AG04450 (cell line): ENCODE measurements at regions of chr19 and their contacts with region 1.

Region 1: DNA sequence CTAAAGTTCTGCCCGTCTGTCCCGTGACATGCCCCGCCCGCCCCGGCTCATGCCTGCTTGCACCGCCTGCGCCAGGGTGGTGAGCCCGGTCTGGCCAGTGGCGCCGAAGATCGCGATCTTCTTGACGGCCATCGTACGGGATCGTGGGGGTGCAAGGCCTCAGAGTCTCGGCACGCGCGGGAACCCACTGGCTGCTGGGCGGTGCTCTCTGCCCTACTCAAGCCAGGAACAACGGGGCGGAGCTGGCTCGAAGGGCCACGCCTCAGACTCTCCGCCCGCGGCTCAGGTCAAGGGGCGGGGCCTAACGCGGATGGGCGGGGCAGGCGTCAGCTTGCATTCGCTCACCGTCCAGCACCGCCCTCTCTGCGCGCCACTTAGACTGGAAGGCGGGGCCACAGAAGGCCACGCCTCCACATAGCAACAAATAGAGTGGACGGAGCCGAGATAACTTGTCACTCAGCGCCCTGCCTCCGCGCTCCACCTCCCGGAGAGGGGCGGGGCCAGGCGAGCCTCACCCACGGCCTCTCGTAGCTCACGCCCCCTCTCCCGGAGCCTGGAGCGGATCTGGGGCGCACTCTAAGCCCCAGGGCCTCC is at the start of gene BLVRB:
- DNase-seq: peak; percentile 99
- H3K4me3 ChIP-seq: peak within 1 kb of the TSS; percentile 74
- H3K27ac ChIP-seq: peak within 1 kb of the TSS; percentile 71
- H3K27me3 ChIP-seq: peaks cover 11% of the 10 kb centered on the region
- CTCF ChIP-seq: no peak
- polyA plus RNA-seq, gene BLVRB: 40.4 and 58.0 TPM in 2 replicates

Region 2: DNA sequence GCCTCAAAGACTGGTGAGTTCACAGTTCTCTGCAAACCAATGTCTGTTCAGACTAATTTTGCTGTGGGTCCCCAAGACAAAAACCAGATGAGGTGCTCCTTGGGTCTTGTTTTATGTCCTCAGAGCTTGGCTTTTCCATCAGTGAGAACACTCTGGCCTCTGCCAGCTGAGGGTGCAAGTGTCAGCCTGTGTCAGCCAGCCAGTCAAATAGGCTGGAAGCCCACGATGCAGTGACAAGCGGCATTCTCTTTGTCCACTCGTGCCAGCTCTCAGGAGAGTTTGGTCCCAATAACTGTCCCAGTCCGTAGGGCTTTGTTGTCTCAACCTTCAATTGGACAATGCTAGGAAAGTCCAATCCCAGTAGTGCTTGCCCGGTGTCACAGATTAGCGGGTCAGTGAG is 171.1 kb before region 1 on chr19:
- CTCF ChIA-PET with region 1: no interaction called
- POLR2A ChIA-PET with region 1: no interaction called
- DNase-seq: no peak
- H3K4me3 ChIP-seq: no peak overlapping the region
- H3K27ac ChIP-seq: no peak overlapping the region
- H3K27me3 ChIP-seq: no peaks in the 10 kb centered on the region
- CTCF ChIP-seq: no peak

Region 3: GRCh38 chr19:40444192-40445028 is 21.2 kb before region 1 on chr19 and contains the start of gene SERTAD3:
- CTCF ChIA-PET with region 1: interaction called, 11 read pairs
- POLR2A ChIA-PET with region 1: interaction called, 9 read pairs
- DNase-seq: peak; percentile 82
- H3K4me3 ChIP-seq: peak within 1 kb of the TSS; percentile 100
- H3K27ac ChIP-seq: peak within 1 kb of the TSS; percentile 91
- H3K27me3 ChIP-seq: no peaks in the 10 kb centered on the region
- CTCF ChIP-seq: no peak
- polyA plus RNA-seq, gene SERTAD3: 16.1 and 19.6 TPM in 2 replicates

Region 4: GRCh38 chr19:40452016-40452415 is 13.6 kb before region 1 on chr19:
- CTCF ChIA-PET with region 1: interaction called, 49 read pairs
- POLR2A ChIA-PET with region 1: no interaction called
- DNase-seq: no peak
- H3K4me3 ChIP-seq: no peak overlapping the region
- H3K27ac ChIP-seq: no peak overlapping the region
- H3K27me3 ChIP-seq: no peaks in the 10 kb centered on the region
- CTCF ChIP-seq: no peak

Region 5: DNA sequence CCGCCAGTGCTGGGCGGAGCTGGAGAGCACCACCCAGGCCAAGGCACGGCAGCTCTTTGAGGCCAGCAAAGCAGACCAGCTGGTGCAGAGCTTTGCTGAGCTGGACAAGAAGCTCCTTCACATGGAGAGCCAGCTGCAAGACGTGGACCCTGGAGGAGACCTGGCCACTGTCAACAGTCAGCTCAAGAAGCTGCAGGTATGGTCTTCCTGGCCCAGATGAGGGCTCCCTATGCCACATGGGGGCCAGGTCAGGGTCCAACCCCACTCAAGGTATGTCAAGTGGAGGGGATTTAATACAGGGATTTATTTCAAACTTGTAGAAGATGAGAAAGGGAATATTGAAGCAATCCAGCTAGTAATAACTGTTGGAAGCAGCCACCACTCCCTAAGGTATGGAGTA is 68.5 kb after region 1 on chr19:
- CTCF ChIA-PET with region 1: no interaction called
- POLR2A ChIA-PET with region 1: no interaction called
- DNase-seq: no peak
- H3K4me3 ChIP-seq: no peak overlapping the region
- H3K27ac ChIP-seq: no peak overlapping the region
- H3K27me3 ChIP-seq: peaks cover 24% of the 10 kb centered on the region
- CTCF ChIP-seq: no peak

Region 6: DNA sequence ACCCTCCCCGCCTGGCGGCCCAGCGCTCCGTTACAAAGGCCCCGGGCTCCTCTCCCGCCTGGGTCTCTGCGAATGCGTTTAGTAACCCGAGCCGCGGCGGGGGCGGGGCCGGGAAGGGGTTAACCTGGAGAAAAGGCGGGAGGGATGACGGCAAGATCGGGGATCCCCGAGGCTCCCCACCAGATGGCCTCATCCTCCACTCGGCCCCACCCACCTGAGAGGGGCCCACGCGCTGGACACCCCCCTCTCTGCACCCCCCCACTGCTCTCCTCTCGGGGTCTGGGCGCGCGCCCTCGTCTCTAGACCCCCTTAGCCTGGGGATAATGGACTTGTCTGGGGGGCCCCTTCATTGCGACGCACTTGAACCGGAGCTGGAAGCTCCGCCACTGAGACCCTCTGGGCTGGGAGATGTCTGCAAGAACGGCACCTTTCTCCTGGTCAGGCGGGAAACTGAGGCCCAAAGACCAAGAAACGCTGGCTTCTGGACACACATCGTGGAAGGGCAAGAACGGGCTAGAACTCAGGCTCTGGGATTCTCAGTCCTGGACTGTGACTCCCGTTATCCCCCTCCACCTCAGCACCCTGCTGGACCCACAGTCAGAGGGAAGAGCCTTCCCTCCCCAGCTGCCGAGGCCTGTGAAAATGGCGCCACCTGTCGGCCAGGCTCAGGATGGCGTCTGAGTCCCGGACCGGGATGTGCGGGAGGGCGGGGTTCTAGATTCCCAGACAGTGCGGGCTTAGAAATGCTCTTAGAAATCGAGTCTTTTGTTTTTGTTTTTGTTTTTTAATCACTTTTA is 132.7 kb after region 1 on chr19:
- CTCF ChIA-PET with region 1: interaction called, 34 read pairs
- POLR2A ChIA-PET with region 1: no interaction called
- DNase-seq: peak; percentile 81
- H3K4me3 ChIP-seq: peak overlapping the region; percentile 69
- H3K27ac ChIP-seq: peak overlapping the region; percentile 87
- H3K27me3 ChIP-seq: no peaks in the 10 kb centered on the region
- CTCF ChIP-seq: peak; percentile 99